ENCODE measurements at regions of chr22 and their contacts with region 1.

Region 1: DNA sequence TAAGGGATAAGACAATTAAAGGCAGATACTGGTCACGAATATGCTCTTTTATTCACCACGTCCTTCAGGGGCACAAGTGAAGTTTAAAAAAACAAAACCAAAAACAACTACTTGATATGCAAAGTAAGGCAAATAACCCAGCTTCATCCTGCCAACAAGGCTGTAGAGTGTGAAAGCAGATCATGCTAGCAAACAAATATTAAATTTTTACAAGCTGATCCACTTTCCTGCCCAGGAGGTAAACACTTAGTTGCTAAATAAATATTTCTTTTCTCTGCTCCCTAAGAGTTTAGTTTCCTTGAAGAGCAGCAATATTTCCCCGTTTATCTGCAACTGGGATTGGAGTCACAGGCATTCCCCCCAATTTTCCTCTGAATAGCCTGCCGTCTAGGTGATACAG is 300.2 kb downstream of the LARGE1 start:
- DNase-seq: no peak
- H3K4me3 ChIP-seq: no peak overlapping the region
- H3K27ac ChIP-seq: no peak overlapping the region
- H3K4me1 ChIP-seq: no peaks in the 10 kb centered on the region
- H3K27me3 ChIP-seq: 0 out of 2 replicates have a peak, but pooled peaks cover 3% of the 10 kb centered on the region
- CTCF ChIP-seq: no peak

Region 2: GRCh38 chr22:33459137-33459536 is 160.9 kb before region 1 on chr22:
- CTCF ChIA-PET with region 1: no interaction called
- POLR2A ChIA-PET with region 1: interaction called, 12 read pairs
- intact Hi-C with region 1: no loop called
- DNase-seq: no peak
- H3K4me3 ChIP-seq: no peak overlapping the region
- H3K27ac ChIP-seq: no peak overlapping the region
- H3K4me1 ChIP-seq: no peaks in the 10 kb centered on the region
- H3K27me3 ChIP-seq: no peaks in the 10 kb centered on the region
- CTCF ChIP-seq: no peak

Measured in PC-9 (cell line).